Activated B cell treated with CpG ODN at 0.5 μM for 24 hours (primary cell): ENCODE measurements at regions of chr11 and their contacts with region 1.

Region 1: GRCh38 chr11:128238521-128239265 is 348.7 kb downstream of the ETS1 start:
- DNase-seq: no peak
- ATAC-seq: peak; percentile 85
- H3K4me3 Mint-ChIP-seq: peak overlapping the region; percentile 69
- H3K27ac Mint-ChIP-seq: peak overlapping the region; percentile 90
- H3K4me1 Mint-ChIP-seq: peaks cover 14% of the 10 kb centered on the region
- H3K27me3 Mint-ChIP-seq: no peaks in the 10 kb centered on the region
- CTCF ChIP-seq: no peak

Region 2: DNA sequence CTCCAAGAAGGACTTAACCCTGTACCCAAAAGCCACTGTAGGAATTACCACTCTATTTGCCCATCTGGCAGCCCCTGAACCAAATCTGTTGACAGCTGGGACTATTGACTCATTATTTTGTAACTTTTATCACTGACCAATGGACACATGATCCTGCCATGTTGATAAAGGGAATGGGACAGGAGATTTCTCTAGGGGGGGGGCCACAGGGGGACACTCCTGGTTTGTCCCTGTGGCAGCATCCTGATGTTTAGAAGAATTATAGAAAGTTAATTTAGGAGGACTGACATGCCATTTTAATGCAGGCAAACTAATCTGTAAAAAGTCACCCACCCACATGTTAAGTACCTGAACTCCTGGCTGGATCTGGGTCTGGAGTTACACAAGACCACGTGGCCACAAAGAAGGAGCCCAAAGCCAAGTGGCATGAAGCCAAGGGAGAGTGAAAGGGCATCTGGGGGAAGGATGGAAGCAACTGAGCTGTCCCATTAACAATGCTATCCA is 209.4 kb before region 1 on chr11:
- CTCF ChIA-PET with region 1: no interaction called
- POLR2A ChIA-PET with region 1: no interaction called
- intact Hi-C with region 1: no loop called
- DNase-seq: no peak
- ATAC-seq: no peak
- H3K4me3 Mint-ChIP-seq: no peak overlapping the region
- H3K27ac Mint-ChIP-seq: no peak overlapping the region
- H3K4me1 Mint-ChIP-seq: no peaks in the 10 kb centered on the region
- H3K27me3 Mint-ChIP-seq: peaks cover 31% of the 10 kb centered on the region
- CTCF ChIP-seq: no peak

Region 3: DNA sequence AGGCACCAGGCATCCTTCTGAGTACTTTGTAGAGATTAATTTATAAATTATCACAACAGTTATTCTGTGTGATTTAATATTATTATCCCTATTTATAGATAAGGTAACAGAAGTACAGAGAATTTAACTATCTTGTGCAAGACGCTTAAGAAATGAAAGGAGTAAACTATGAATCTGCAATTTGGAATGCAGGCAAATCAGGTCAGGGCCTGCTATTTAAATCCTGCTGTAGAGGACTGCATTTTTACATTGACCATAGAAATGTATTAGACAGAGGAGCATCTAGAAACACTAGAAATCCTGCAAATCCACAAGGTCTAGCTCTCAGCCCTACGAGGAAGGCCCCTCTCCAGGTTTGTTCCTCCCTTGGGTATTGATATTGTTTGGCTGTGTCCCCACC is 12.4 kb after region 1 on chr11:
- CTCF ChIA-PET with region 1: interaction called, 4 read pairs
- POLR2A ChIA-PET with region 1: interaction called, 4 read pairs
- intact Hi-C with region 1: loop called (anchors 2 kb)
- DNase-seq: no peak
- ATAC-seq: no peak
- H3K4me3 Mint-ChIP-seq: no peak overlapping the region
- H3K27ac Mint-ChIP-seq: no peak overlapping the region
- H3K4me1 Mint-ChIP-seq: peaks cover 18% of the 10 kb centered on the region
- H3K27me3 Mint-ChIP-seq: no peaks in the 10 kb centered on the region
- CTCF ChIP-seq: no peak